Activated CD8-positive, alpha-beta memory T cell treated with anti-CD3 and anti-CD28 coated beads, Interleukin-2, amount 10 ng/mL, durations not matched to agents 7 days and 5 days (primary cell): ENCODE measurements at regions of chr22 and their contacts with region 1.

Region 1: GRCh38 chr22:50326959-50327710 is at the start of gene DENND6B:
- DNase-seq: peak; percentile 73
- ATAC-seq: peak; percentile 96
- H3K4me3 Mint-ChIP-seq: peak within 1 kb of the TSS; percentile 74
- H3K27ac Mint-ChIP-seq: peak within 1 kb of the TSS; percentile 83
- H3K4me1 Mint-ChIP-seq: peaks cover 17% of the 10 kb centered on the region
- H3K27me3 Mint-ChIP-seq: peaks cover 13% of the 10 kb centered on the region
- total RNA-seq, gene DENND6B: 5.7 to 8.8 TPM

Region 2: GRCh38 chr22:50314455-50315288 is 12.5 kb before region 1 on chr22:
- CTCF ChIA-PET with region 1: interaction called, 11 read pairs
- DNase-seq: peak; percentile 92
- ATAC-seq: peak; percentile 96
- H3K4me3 Mint-ChIP-seq: peak overlapping the region; percentile 84
- H3K27ac Mint-ChIP-seq: peak overlapping the region; percentile 93
- H3K4me1 Mint-ChIP-seq: peaks cover 15% of the 10 kb centered on the region
- H3K27me3 Mint-ChIP-seq: no peaks in the 10 kb centered on the region

Region 3: GRCh38 chr22:50476868-50477267 is 149.7 kb after region 1 on chr22:
- CTCF ChIA-PET with region 1: no interaction called
- DNase-seq: no peak
- ATAC-seq: no peak
- H3K4me3 Mint-ChIP-seq: no peak overlapping the region
- H3K27ac Mint-ChIP-seq: peak overlapping the region; percentile 19
- H3K4me1 Mint-ChIP-seq: peaks cover 30% of the 10 kb centered on the region
- H3K27me3 Mint-ChIP-seq: peaks cover 16% of the 10 kb centered on the region

Region 4: DNA sequence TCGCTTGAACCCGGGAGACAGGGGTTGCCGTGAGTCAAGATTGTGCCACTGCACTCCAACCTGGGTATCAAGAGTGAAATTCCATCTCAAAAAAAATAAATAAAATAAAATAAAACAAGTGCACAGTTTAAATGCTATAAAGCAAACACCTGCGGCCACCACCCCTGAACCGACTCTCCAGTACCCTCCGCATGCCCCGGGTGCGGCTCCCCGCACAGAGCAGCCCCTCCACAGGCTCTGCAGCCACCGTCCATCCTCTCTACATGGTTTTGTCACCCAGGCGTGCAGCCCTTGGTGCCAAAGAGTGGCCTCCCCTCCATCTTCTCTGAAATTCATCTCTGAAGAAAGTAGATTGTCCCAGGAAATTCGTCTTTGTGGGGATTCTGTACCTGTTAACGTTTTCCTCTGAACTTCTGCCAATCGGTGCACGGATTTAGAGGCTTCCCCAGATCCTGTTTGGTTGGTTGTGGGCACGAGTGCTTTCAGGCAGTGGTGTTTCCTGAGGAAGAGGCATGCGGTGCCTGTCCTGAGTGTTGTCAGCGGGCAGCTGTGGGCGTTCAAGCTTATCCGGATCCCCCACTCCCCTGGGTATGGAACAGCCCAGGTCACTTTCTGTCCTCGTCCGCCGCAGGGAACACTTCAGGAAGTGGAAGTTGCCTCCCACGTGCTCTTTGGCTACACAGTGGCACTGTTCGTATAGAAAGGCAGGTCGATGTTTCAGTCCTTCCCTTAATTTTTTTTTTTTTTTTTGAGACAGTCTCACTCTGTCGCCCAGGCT is 163.6 kb after region 1 on chr22:
- CTCF ChIA-PET with region 1: no interaction called
- DNase-seq: no peak
- ATAC-seq: peak; percentile 32
- H3K4me3 Mint-ChIP-seq: no peak overlapping the region
- H3K27ac Mint-ChIP-seq: no peak overlapping the region
- H3K4me1 Mint-ChIP-seq: peaks cover 8% of the 10 kb centered on the region
- H3K27me3 Mint-ChIP-seq: peaks cover 5% of the 10 kb centered on the region